Left ventricle myocardium superior (tissue), 1 donor: ENCODE measurements at regions of chr17 and their contacts with region 1.

Region 1: GRCh38 chr17:27879987-27880608 is 13.1 kb downstream of the LYRM9 start:
- DNase-seq: peak; percentile 79
- ATAC-seq: peak; percentile 96

Region 2: DNA sequence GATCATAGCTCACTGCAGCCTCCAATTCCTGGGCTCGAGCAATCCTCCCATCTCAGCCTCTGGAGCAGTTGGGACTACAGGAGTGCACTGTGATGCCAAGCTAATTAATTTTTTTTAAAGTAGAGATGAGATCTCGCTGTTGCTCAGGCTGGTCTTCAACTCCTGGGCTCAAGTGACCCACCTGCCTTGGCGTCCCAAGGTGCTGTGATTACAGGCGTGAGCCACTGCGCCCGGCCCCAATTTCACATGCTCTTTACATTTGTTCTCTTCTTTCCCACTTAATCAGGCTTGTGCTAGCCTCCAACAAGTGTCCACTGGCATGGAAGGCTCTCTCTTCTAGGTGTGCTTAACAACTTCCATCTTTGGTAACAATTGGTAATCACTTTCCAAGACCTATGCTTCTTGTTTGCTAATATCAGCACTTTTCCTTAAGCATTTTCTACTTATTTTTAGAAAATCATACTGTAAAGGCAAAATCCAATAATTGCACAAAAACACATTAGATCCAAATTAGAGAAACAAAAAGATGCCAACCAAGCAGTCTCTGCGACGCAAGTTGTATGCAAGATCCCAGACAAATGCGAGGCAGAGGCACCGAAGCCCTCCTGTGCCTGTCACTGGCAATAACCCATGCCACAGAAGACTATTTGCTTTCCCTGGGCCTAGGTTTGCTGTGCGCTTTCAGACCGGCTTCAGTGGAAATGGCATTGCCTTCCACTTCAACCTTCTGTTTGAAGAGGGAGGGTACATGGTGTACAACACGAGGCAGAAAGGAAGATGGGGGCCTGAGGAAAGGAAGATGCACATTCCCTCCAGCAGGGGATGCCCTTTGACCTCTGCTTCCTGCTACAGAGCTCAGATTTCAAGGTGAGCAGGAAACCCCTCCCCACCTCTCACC is 132.4 kb before region 1 on chr17:
- intact Hi-C with region 1: no loop called
- DNase-seq: no peak
- ATAC-seq: no peak

Region 3: DNA sequence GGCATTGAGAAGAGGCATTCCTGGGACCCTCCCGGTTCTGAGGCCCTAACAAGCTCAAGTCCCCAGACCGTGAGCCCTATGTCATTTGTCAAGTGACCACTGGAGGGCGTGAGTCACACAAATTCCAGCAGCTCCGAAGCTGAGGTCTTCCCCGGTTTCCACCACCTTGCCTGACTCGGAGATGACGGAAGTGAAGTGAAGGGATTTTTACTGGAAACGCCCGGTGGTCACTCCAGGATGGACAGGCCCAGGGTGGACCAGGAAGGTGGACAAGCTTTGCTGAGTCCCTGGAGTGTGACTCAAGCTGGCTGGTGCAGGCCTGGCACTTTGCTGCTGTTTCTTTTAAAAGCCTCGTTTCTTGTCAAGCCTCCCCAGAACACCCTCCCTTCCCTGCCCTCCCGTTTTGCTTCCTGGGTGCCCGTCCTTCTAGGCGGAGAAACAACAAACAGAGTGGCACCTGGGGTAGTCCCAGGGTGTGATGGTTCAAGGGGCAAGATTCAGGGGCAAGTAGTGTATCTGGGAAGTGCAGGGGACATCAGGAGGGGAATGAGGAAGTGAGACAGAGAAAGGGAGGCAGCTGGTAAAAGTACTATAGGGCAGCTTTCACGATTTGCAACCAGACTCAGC is 74.5 kb before region 1 on chr17:
- intact Hi-C with region 1: loop called (anchors 2 kb)
- DNase-seq: peak; percentile 81
- ATAC-seq: peak; percentile 95